A549 (cell line): ENCODE measurements at regions of chr11 and their contacts with region 1.

Region 1: DNA sequence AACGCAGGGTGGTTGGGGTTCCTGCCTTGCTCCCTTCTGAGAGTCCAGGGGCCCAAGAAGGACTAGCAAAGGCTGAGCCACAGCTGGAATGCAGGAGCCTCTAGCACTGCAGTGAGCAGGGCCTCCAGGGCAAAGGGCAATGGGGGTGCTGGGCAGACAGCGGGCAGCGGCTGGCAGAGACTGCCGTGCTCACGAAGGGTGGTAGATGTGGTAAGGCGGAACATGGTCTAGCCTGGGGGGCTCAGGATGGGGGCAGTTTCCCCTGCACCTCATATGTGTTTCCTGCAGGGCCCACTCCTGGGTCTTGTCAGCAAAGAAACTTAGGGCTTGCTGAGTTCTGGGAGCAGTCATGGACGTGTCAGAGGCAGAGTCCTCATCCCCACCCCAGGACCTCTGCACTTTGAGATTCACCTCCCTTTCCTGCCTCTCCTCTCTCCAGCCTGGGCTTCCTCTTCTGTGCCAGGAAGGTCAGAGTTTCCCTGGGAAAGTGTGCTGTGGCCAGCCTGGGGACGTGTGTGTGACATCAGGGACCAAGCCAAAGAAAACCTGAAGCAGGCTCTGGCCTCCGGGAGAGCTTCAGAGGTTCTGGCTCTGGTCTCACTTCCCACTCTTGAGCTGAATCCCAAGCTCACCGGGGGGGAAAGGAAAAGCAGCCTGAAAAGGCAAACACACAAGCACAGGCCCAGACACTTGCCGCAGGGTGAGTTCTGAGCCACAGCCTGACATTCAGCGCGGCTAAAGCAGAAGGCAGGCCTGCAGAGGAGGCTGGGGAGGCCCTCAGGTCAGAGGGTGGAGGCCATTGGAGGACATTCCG is 4.4 kb downstream of the MOGAT2 start:
- DNase-seq: no peak
- ATAC-seq: no peak
- H3K4me3 ChIP-seq: no peak overlapping the region
- H3K27ac ChIP-seq: no peak overlapping the region
- H3K4me1 ChIP-seq: no peaks in the 10 kb centered on the region
- CTCF ChIP-seq: no peak
- EP300 ChIP-seq: no peak
- POLR2A ChIP-seq: no peak
- RAD21 ChIP-seq: no peak

Region 2: DNA sequence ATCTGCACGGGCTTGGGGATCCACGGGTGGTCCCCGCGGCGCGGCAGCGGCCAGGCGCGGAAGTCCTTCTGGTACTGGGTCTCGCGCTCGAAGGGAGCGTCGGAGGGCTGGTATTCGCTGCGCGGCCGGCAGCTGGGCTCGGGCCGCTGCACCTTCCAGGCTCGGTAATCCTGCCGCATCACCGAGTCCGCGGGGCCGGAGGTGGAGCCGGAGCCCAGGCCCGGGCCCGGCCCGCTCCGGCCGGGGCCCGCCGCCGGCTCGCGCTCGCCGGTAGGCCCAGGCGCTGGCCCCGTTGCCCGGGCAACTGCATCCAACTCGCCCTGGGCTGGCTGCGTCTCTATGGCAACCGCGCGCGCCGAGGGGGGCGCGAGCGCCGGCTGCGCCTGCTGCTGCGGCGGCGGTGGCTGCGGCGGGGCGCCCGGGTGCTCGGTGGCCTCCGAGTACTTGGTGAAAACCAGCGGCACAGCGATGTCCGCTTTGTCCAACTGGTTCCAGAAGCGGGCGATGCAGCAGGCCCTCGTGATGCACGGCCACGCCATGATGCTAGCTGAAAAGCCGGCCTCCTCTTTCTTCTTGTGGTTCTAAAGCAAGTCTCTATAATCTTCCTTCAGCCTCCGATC is 54.1 kb before region 1 on chr11:
- CTCF ChIA-PET with region 1: no interaction called
- POLR2A ChIA-PET with region 1: no interaction called
- DNase-seq: peak; percentile 35 to 41
- ATAC-seq: peak; percentile 52 to 66
- H3K4me3 ChIP-seq: peak overlapping the region; percentile 63
- H3K27ac ChIP-seq: peak overlapping the region; percentile 65 to 82
- H3K4me1 ChIP-seq: no peaks in the 10 kb centered on the region
- CTCF ChIP-seq: no peak
- EP300 ChIP-seq: no peak
- POLR2A ChIP-seq: no peak
- RAD21 ChIP-seq: no peak

Region 3: GRCh38 chr11:75768112-75768908 is 46.2 kb after region 1 on chr11 and contains the start of gene DGAT2:
- CTCF ChIA-PET with region 1: interaction called, 11 read pairs
- POLR2A ChIA-PET with region 1: no interaction called
- DNase-seq: peak; percentile 73 to 83
- ATAC-seq: peak; percentile 75 to 93
- H3K4me3 ChIP-seq: peak within 1 kb of the TSS; percentile 51
- H3K27ac ChIP-seq: peak within 1 kb of the TSS; percentile 91 to 93
- H3K4me1 ChIP-seq: peaks cover 11% of the 10 kb centered on the region; the same call in 2 of the 3 replicates
- CTCF ChIP-seq: peak; percentile 17
- EP300 ChIP-seq: no peak
- POLR2A ChIP-seq: no peak; the same call in 1 of the 2 replicates
- RAD21 ChIP-seq: peak; percentile 40 to 41; a peak in 2 of 5 replicates
- polyA plus RNA-seq, gene DGAT2: 1.6 and 2.7 TPM in 2 replicates